Posterior vena cava (tissue), 2 donors: ENCODE measurements at regions of chr1 and their contacts with region 1.

Region 1: GRCh38 chr1:57674801-57675200 is 250.9 kb upstream of the DAB1 start:
- DNase-seq: no peak

Region 2: DNA sequence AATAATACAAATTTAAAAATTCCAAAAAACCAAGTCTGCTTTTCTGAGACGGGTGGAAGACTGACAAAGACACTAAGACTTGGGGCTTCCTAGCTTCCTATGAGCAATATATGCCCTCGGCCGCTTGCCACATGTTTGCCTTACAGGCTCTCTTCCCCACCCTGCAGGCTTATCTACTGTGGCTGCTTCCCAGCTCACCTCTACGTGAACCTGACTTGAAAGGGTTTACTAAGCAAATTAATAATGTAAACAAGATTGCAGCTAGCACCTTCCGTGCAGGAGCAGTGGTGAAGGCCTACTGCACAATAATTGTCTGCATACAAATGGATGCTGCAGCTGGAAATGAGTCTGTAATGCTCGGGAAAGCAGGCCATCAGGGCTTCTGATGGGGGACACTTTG is 98.0 kb before region 1 on chr1:
- intact Hi-C with region 1: loop called in 1 of 2 experiments (anchors 5 kb)
- DNase-seq: no peak